WTC11 (cell line): ENCODE measurements at regions of chr7 and their contacts with region 1.

Region 1: GRCh38 chr7:134420424-134421125 is 38.3 kb downstream of the AKR1B1 start:
- DNase-seq: peak; percentile 58
- ATAC-seq: peak; percentile 95
- H3K4me3 Mint-ChIP-seq: no peak overlapping the region
- H3K27ac Mint-ChIP-seq: no peak overlapping the region
- H3K4me1 Mint-ChIP-seq: peaks cover 10% of the 10 kb centered on the region
- H3K27me3 Mint-ChIP-seq: no peaks in the 10 kb centered on the region
- CTCF ChIP-seq: 0 out of 2 replicates have a peak, but pooled peaks have one; percentile 17

Region 2: GRCh38 chr7:134357492-134357891 is 63.1 kb before region 1 on chr7:
- CTCF ChIA-PET with region 1: interaction called, 13 read pairs
- POLR2A ChIA-PET with region 1: no interaction called
- DNase-seq: no peak
- ATAC-seq: no peak
- H3K4me3 Mint-ChIP-seq: no peak overlapping the region
- H3K27ac Mint-ChIP-seq: no peak overlapping the region
- H3K4me1 Mint-ChIP-seq: no peaks in the 10 kb centered on the region
- H3K27me3 Mint-ChIP-seq: peaks cover 14% of the 10 kb centered on the region
- CTCF ChIP-seq: no peak; the same call in 1 of the 2 replicates

Region 3: GRCh38 chr7:134470864-134471263 is 50.3 kb after region 1 on chr7:
- CTCF ChIA-PET with region 1: no interaction called
- POLR2A ChIA-PET with region 1: no interaction called
- DNase-seq: no peak
- ATAC-seq: no peak
- H3K4me3 Mint-ChIP-seq: no peak overlapping the region
- H3K27ac Mint-ChIP-seq: no peak overlapping the region
- H3K4me1 Mint-ChIP-seq: peaks cover 6% of the 10 kb centered on the region
- H3K27me3 Mint-ChIP-seq: no peaks in the 10 kb centered on the region; the same call in 1 of the 2 replicates
- CTCF ChIP-seq: no peak